ENCODE measurements at regions of chr5 and their contacts with region 1.

Region 1: GRCh38 chr5:124677374-124678351 is 68.8 kb downstream of the ZNF608 start:
- DNase-seq: no peak
- H3K4me3 ChIP-seq: no peak overlapping the region
- H3K27ac ChIP-seq: peak overlapping the region; percentile 65 to 71
- H3K4me1 ChIP-seq: peaks cover 0 to 7% of the 10 kb centered on the region in 2 donors
- H3K27me3 ChIP-seq: no peaks in the 10 kb centered on the region
- CTCF ChIP-seq: no peak
- POLR2A ChIP-seq: no peak

Region 2: GRCh38 chr5:124352312-124352711 is 325.4 kb before region 1 on chr5:
- intact Hi-C with region 1: no loop called
- DNase-seq: no peak
- H3K4me3 ChIP-seq: no peak overlapping the region
- H3K27ac ChIP-seq: no peak overlapping the region
- H3K4me1 ChIP-seq: no peaks in the 10 kb centered on the region
- H3K27me3 ChIP-seq: no peaks in the 10 kb centered on the region
- CTCF ChIP-seq: no peak
- POLR2A ChIP-seq: no peak

Region 3: GRCh38 chr5:124748687-124749594 is 71.3 kb after region 1 on chr5:
- intact Hi-C with region 1: loop called (anchors 10 kb)
- DNase-seq: peak; percentile 61 to 84
- H3K4me3 ChIP-seq: peak overlapping the region; percentile 49 to 50
- H3K27ac ChIP-seq: peak overlapping the region; percentile 90 to 93
- H3K4me1 ChIP-seq: no peaks in the 10 kb centered on the region
- H3K27me3 ChIP-seq: no peaks in the 10 kb centered on the region
- CTCF ChIP-seq: no peak
- POLR2A ChIP-seq: peak; percentile 40 to 48